ENCODE measurements at regions of chr10 and their contacts with region 1.

Region 1: GRCh38 chr10:35635576-35635975 is 6.5 kb downstream of the FZD8 start:
- DNase-seq: peak in 1 of 2 donors; percentile 61
- H3K4me3 ChIP-seq: no peak overlapping the region
- CTCF ChIP-seq: peak in 1 of 3 donors; percentile 62
- POLR2A ChIP-seq: no peak

Region 2: DNA sequence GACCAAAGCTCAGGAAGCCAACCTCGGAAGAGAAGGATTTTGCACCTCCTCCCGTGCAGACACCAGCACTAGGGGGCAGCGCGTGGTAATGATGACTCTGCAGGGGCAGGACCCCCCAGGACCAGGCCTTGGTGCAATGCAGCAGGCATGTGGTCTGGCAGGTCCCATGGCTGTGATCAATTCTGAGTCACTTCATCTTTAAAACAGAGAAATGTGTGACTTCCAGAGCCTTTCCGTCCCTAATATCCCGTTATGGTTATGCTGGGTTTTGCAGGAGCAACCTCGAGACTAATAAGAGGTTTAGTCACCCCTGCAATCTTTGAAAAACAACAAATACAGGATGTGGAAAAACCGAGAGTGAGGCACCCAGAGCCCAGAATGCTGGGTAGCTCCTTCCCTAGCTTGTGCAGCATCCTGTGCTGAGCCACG is 60.6 kb before region 1 on chr10:
- intact Hi-C with region 1: no loop called
- DNase-seq: peak in 1 of 2 donors; percentile 53
- H3K4me3 ChIP-seq: no peak overlapping the region
- CTCF ChIP-seq: no peak
- POLR2A ChIP-seq: no peak

Region 3: DNA sequence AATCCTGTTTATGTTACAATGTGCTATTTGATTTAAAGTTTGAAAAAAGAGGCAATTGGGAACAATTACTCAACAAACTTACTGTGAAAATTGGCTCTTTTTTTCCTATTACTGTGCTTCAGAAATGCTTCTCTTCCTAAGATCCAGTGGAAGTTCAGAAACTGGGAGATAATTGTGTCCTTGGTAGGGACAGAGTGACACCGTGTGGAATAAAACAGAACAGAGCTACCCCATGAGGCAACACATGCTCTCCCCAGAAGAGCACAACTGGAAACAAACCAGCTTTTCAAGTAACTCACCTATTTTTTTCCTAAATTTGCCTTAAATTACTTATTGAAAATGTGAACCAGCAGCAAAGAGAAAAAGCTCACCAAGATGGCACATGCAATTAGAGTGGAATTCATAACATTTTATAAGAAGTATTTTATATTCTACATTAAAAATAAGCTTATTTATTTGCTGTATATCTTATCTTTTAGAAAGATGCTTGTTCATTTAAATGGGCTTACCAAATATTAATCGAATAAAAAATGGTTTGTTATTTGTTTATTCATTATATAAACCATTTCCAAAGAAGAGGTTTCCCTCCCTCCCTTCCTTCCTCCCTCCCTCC is 1143.8 kb after region 1 on chr10:
- intact Hi-C with region 1: loop called (anchors 5 kb)
- DNase-seq: peak in 1 of 2 donors; percentile 19
- H3K4me3 ChIP-seq: no peak overlapping the region
- CTCF ChIP-seq: no peak
- POLR2A ChIP-seq: no peak

Measured in lower leg skin (tissue), 4 donors.